Activated T-helper 2 cell treated with anti-CD3 and anti-CD28 coated beads, Interferon-gamma antibody, Interleukin-2, Interleukin-4, amounts not matched to agents 10 μg/mL and 5 μg/mL and 100 μg/mL, durations not matched to agents 14 hours and 24 hours and 36 hours (primary cell): ENCODE measurements at regions of chr5 and their contacts with region 1.

Region 1: DNA sequence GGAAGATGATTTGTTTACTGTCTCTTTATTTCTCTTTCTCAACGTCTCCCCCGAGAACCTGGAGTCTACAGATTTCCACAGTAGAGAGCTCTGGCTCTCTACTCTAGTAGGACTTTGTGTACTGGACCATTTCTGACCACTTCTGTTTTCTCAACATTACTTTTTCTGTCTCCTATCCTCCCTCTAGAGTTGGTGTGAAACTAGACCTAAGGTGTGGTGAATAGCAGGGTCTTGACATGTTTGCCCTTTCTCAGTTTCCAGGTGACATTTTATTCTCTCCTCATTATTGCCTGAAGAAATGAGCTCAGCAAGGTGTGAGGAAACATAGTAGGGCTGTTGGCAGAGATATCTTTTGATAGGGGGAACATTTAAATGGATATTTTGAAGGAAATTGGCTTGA is 62.1 kb upstream of the IL6ST start:
- DNase-seq: no peak
- H3K4me3 Mint-ChIP-seq: no peak overlapping the region
- H3K27ac Mint-ChIP-seq: no peak overlapping the region
- H3K4me1 Mint-ChIP-seq: peaks cover 45% of the 10 kb centered on the region
- H3K27me3 Mint-ChIP-seq: peaks cover 26% of the 10 kb centered on the region

Region 2: GRCh38 chr5:55591686-55592085 is 465.2 kb before region 1 on chr5:
- intact Hi-C with region 1: no loop called
- DNase-seq: no peak
- H3K4me3 Mint-ChIP-seq: peak overlapping the region; percentile 31
- H3K27ac Mint-ChIP-seq: peak overlapping the region; percentile 97
- H3K4me1 Mint-ChIP-seq: peaks cover 43% of the 10 kb centered on the region
- H3K27me3 Mint-ChIP-seq: no peaks in the 10 kb centered on the region

Region 3: GRCh38 chr5:56012281-56012963 is 44.5 kb before region 1 on chr5:
- intact Hi-C with region 1: loop called (anchors 1 kb)
- DNase-seq: peak; percentile 57
- H3K4me3 Mint-ChIP-seq: peak overlapping the region; percentile 19
- H3K27ac Mint-ChIP-seq: peak overlapping the region; percentile 86
- H3K4me1 Mint-ChIP-seq: peaks cover 29% of the 10 kb centered on the region
- H3K27me3 Mint-ChIP-seq: peaks cover 5% of the 10 kb centered on the region

Region 4: DNA sequence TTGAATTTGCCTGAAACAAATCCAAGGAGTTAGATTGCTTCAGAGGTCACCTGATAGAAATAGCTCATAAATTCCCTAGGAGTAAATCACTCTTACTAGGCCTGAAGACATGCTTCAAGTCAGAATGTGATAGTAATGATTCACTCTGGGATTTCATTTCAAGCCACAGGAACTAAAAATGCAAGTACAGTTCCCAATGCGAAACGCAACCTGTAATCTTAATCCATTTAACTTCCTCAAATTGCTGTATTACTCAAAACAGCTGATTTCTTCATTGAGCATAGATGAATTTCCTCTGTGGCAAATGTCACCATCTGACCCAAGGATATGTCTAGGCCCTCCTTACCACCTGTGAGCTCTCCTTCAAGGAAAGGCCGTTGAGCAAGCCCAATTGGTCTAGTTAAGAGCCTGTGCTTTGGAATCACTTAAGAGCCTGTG is 30.0 kb before region 1 on chr5:
- intact Hi-C with region 1: loop called (anchors 2 kb)
- DNase-seq: no peak
- H3K4me3 Mint-ChIP-seq: no peak overlapping the region
- H3K27ac Mint-ChIP-seq: no peak overlapping the region
- H3K4me1 Mint-ChIP-seq: peaks cover 22% of the 10 kb centered on the region
- H3K27me3 Mint-ChIP-seq: peaks cover 39% of the 10 kb centered on the region

Region 5: GRCh38 chr5:56080375-56081052 is 23.6 kb after region 1 on chr5:
- intact Hi-C with region 1: loop called (anchors 2 kb)
- DNase-seq: no peak
- H3K4me3 Mint-ChIP-seq: no peak overlapping the region
- H3K27ac Mint-ChIP-seq: peak overlapping the region; percentile 0
- H3K4me1 Mint-ChIP-seq: peaks cover 31% of the 10 kb centered on the region
- H3K27me3 Mint-ChIP-seq: peaks cover 3% of the 10 kb centered on the region

Region 6: GRCh38 chr5:56095579-56096102 is 38.8 kb after region 1 on chr5:
- intact Hi-C with region 1: loop called (anchors 5 kb)
- DNase-seq: no peak
- H3K4me3 Mint-ChIP-seq: no peak overlapping the region
- H3K27ac Mint-ChIP-seq: no peak overlapping the region
- H3K4me1 Mint-ChIP-seq: peaks cover 53% of the 10 kb centered on the region
- H3K27me3 Mint-ChIP-seq: no peaks in the 10 kb centered on the region

Region 7: GRCh38 chr5:56148453-56148971 is 91.6 kb after region 1 on chr5:
- intact Hi-C with region 1: loop called (anchors 2 kb)
- DNase-seq: peak; percentile 59
- H3K4me3 Mint-ChIP-seq: no peak overlapping the region
- H3K27ac Mint-ChIP-seq: peak overlapping the region; percentile 54
- H3K4me1 Mint-ChIP-seq: peaks cover 54% of the 10 kb centered on the region
- H3K27me3 Mint-ChIP-seq: no peaks in the 10 kb centered on the region